CD8-positive, alpha-beta T cell (primary cell): ENCODE measurements at regions of chr3 and their contacts with region 1.

Region 1: DNA sequence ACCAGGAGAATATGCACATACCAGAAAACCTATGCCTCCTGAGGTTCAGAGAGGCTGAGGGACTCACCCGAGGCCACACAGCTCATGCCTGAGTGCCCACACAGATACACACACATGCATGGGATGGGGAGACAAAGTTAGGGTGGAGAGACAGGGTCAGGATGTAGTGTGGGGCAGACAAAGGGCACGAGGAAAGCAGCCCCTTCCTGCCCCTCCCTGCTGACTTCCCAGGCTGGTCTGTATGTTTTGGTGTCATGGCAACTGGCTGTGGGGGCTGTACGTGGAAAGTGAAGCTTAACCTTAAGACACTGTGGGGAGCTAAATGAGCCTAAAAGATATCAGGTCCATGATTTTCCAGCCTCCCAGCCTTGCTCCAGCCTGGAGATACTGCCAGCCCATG is 57.8 kb downstream of the EPHB3 start:
- DNase-seq: peak in 6 of 9 experiments; percentile 5 to 78 (median 35)
- ATAC-seq: peak; percentile 51
- H3K4me3 ChIP-seq: no peak overlapping the region
- H3K4me3 Mint-ChIP-seq: no peak overlapping the region
- H3K27ac ChIP-seq: no peak overlapping the region
- H3K27ac Mint-ChIP-seq: no peak overlapping the region
- H3K4me1 ChIP-seq: peaks cover 14% of the 10 kb centered on the region
- H3K4me1 Mint-ChIP-seq: peaks cover 19% of the 10 kb centered on the region
- H3K27me3 ChIP-seq: peaks cover 0 to 3% of the 10 kb centered on the region in 2 experiments
- H3K27me3 Mint-ChIP-seq: peaks cover 16% of the 10 kb centered on the region
- CTCF ChIP-seq: no peak

Region 2: GRCh38 chr3:184568924-184569829 is 50.2 kb before region 1 on chr3:
- CTCF ChIA-PET with region 1: no interaction called
- POLR2A ChIA-PET with region 1: no interaction called
- intact Hi-C with region 1: loop called in 1 of 2 experiments (anchors 1 kb)
- DNase-seq: peak in 2 of 9 experiments; percentile 18 to 24
- ATAC-seq: peak; percentile 38
- H3K4me3 ChIP-seq: peak overlapping the region in 1 of 2 experiments; percentile 37
- H3K4me3 Mint-ChIP-seq: peak overlapping the region; percentile 42
- H3K27ac ChIP-seq: no peak overlapping the region
- H3K27ac Mint-ChIP-seq: no peak overlapping the region
- H3K4me1 ChIP-seq: peaks cover 5% of the 10 kb centered on the region
- H3K4me1 Mint-ChIP-seq: peaks cover 7% of the 10 kb centered on the region
- H3K27me3 ChIP-seq: peaks cover 6 to 19% of the 10 kb centered on the region in 2 experiments
- H3K27me3 Mint-ChIP-seq: peaks cover 38% of the 10 kb centered on the region
- CTCF ChIP-seq: no peak